ENCODE measurements at regions of chr2 and their contacts with region 1.

Region 1: GRCh38 chr2:215705771-215706361 is 270.0 kb upstream of the FN1 start:
- DNase-seq: no peak
- H3K4me3 ChIP-seq: no peak overlapping the region
- H3K27ac ChIP-seq: no peak overlapping the region
- H3K4me1 ChIP-seq: peaks cover 1 to 6% of the 10 kb centered on the region in 2 donors
- H3K27me3 ChIP-seq: no peaks in the 10 kb centered on the region
- CTCF ChIP-seq: no peak
- POLR2A ChIP-seq: no peak

Region 2: GRCh38 chr2:215793747-215794595 is 88.1 kb after region 1 on chr2:
- intact Hi-C with region 1: no loop called
- DNase-seq: peak in 6 of 7 donors; percentile 20 to 58 (median 46)
- H3K4me3 ChIP-seq: no peak overlapping the region
- H3K27ac ChIP-seq: no peak overlapping the region
- H3K4me1 ChIP-seq: peaks cover 0 to 6% of the 10 kb centered on the region in 2 donors
- H3K27me3 ChIP-seq: no peaks in the 10 kb centered on the region
- CTCF ChIP-seq: no peak
- POLR2A ChIP-seq: no peak

Region 3: GRCh38 chr2:215828517-215829184 is 122.8 kb after region 1 on chr2:
- intact Hi-C with region 1: loop called in 1 of 2 experiments (anchors 10 kb)
- DNase-seq: peak; percentile 43 to 78 (median 76)
- H3K4me3 ChIP-seq: no peak overlapping the region
- H3K27ac ChIP-seq: no peak overlapping the region
- H3K4me1 ChIP-seq: peaks cover 13 to 15% of the 10 kb centered on the region in 2 donors
- H3K27me3 ChIP-seq: no peaks in the 10 kb centered on the region
- CTCF ChIP-seq: peak; percentile 62 to 87 (median 73)
- POLR2A ChIP-seq: no peak

Measured in adrenal gland (tissue), 19 donors.